Activated CD4-positive, alpha-beta memory T cell treated with anti-CD3 and anti-CD28 coated beads for 36 hours (primary cell): ENCODE measurements at regions of chr11 and their contacts with region 1.

Region 1: DNA sequence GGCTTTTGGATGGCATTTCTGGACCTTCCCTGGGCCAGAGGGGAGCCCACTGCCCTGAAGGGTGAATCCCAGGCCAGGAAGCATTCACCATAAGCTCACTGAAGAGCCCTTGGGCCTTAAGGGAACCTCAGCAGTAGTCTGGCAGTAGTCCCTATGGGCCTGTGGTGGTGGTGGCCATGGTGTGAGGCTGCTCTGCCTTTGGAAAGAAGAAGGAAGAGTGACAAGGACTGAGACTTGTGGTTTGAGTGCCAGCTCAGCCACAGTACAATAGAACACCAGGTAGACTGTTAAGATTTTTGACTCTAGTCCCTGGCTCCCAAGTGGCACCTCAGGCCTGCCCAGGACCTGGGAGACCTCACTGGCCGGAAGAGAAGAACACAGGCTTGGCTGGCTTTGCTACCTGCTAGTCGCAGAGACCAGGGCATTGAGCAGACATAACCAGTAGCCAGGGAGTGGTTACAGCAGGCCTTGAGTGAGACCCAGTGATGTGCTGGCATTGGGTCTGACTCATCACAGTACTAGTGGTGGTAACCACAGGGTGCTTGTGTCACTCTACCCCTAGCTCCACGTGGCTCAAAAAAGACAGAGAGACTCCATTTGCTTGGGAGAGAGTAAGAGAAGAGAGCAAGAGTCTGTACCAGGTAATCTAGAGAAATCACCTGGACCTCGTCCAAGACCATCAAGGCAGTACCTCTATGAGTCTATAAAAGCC is 259.8 kb upstream of the BLID start:
- DNase-seq: peak; percentile 30
- H3K4me3 Mint-ChIP-seq: no peak overlapping the region
- H3K27ac Mint-ChIP-seq: no peak overlapping the region
- H3K4me1 Mint-ChIP-seq: no peaks in the 10 kb centered on the region
- H3K27me3 Mint-ChIP-seq: no peaks in the 10 kb centered on the region

Region 2: GRCh38 chr11:122398167-122398566 is 22.3 kb after region 1 on chr11:
- CTCF ChIA-PET with region 1: no interaction called
- POLR2A ChIA-PET with region 1: no interaction called
- intact Hi-C with region 1: loop called (anchors 1 kb)
- DNase-seq: peak; percentile 25
- H3K4me3 Mint-ChIP-seq: no peak overlapping the region
- H3K27ac Mint-ChIP-seq: peak overlapping the region; percentile 34
- H3K4me1 Mint-ChIP-seq: peaks cover 17% of the 10 kb centered on the region
- H3K27me3 Mint-ChIP-seq: peaks cover 2% of the 10 kb centered on the region